ENCODE measurements at regions of chr14 and their contacts with region 1.

Region 1: DNA sequence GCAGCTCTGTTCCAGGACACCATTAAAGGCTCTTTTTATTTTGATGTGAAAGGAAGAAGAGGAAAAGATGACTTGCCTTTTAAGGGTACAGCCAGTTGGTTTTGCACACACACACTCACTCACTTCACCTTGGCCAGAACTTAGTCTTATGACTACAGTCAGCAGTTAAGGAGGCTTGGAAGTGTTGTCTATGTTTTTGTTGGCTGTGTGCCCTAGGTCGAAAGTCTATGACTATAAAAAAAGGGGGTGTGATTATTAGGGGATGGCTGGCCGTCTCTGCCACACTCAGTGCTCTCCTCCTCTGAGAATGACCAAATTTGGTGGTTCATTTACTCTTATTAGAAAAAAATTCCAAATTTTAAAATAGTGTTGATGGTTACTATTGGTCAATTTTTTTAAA is 139.5 kb upstream of the OTX2 start:
- DNase-seq: no peak
- ATAC-seq: no peak
- H3K4me3 ChIP-seq: no peak overlapping the region
- H3K27ac ChIP-seq: no peak overlapping the region
- H3K4me1 ChIP-seq: peaks cover 0 to 6% of the 10 kb centered on the region in 2 experiments; a peak in 1 of 4 replicates
- H3K27me3 ChIP-seq: peaks cover 65% of the 10 kb centered on the region
- CTCF ChIP-seq: no peak
- POLR2A ChIP-seq: no peak
- RAD21 ChIP-seq: no peak

Region 2: GRCh38 chr14:56081139-56081538 is 868.7 kb before region 1 on chr14:
- CTCF ChIA-PET with region 1: no interaction called
- POLR2A ChIA-PET with region 1: no interaction called
- RAD21 ChIA-PET with region 1: no interaction called
- intact Hi-C with region 1: no loop called
- DNase-seq: no peak
- ATAC-seq: no peak
- H3K4me3 ChIP-seq: no peak overlapping the region
- H3K27ac ChIP-seq: no peak overlapping the region
- H3K4me1 ChIP-seq: no peaks in the 10 kb centered on the region
- H3K27me3 ChIP-seq: peaks cover 63% of the 10 kb centered on the region
- CTCF ChIP-seq: no peak
- POLR2A ChIP-seq: no peak
- RAD21 ChIP-seq: no peak

Region 3: DNA sequence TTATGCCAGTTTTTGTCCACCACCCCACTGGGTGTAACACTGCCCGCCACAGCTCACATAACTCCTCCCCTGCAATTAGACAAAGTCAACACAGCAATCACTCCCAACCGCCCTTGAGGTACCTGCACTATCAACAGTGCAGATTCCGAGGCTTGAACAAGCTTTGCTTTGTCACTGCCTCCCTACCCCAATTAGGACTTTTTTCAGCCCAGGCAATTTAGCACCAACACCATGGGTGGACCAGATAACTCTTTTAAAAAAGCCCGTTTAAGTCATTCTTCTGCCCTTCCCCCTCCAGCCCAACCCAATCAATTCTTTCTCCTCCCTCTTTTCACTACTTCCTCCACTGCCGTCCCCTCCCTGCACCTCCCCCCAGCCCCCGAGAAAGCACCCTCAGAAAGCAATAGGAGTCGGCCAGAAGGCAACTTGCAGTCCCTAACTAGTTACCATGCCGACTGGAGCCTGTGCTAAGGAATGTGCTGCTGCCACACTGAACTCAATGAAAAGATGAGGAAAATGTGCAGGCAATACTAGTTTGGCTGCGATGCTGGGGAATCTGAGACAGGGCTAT is 93.9 kb before region 1 on chr14:
- CTCF ChIA-PET with region 1: no interaction called
- POLR2A ChIA-PET with region 1: no interaction called
- RAD21 ChIA-PET with region 1: no interaction called
- intact Hi-C with region 1: no loop called
- DNase-seq: no peak
- ATAC-seq: no peak
- H3K4me3 ChIP-seq: no peak overlapping the region
- H3K27ac ChIP-seq: no peak overlapping the region
- H3K4me1 ChIP-seq: no peaks in the 10 kb centered on the region
- H3K27me3 ChIP-seq: peaks cover 49% of the 10 kb centered on the region
- CTCF ChIP-seq: no peak
- POLR2A ChIP-seq: no peak
- RAD21 ChIP-seq: no peak

Region 4: DNA sequence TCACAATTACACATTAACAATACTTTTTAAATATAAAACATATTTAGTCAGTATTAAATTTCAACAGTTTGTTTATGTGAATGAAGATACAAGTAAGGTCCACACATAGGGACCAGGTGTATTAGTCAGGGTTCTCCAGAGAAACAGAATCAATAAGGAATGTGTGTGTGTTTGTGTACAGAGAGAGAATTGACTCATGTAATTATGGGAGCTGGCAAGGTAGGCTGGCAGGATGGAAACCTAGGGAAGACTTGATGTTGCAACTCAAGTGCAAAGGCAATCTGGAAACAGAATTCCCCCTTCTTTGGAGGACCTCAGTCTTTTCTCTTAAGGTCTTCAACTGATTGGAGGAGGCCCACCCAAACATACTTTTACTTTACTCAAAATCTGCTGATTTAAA is 16.4 kb before region 1 on chr14:
- CTCF ChIA-PET with region 1: no interaction called
- POLR2A ChIA-PET with region 1: no interaction called
- RAD21 ChIA-PET with region 1: no interaction called
- intact Hi-C with region 1: no loop called
- DNase-seq: no peak
- ATAC-seq: no peak
- H3K4me3 ChIP-seq: no peak overlapping the region
- H3K27ac ChIP-seq: no peak overlapping the region
- H3K4me1 ChIP-seq: no peaks in the 10 kb centered on the region
- H3K27me3 ChIP-seq: no peaks in the 10 kb centered on the region
- CTCF ChIP-seq: no peak
- POLR2A ChIP-seq: no peak
- RAD21 ChIP-seq: no peak

Region 5: DNA sequence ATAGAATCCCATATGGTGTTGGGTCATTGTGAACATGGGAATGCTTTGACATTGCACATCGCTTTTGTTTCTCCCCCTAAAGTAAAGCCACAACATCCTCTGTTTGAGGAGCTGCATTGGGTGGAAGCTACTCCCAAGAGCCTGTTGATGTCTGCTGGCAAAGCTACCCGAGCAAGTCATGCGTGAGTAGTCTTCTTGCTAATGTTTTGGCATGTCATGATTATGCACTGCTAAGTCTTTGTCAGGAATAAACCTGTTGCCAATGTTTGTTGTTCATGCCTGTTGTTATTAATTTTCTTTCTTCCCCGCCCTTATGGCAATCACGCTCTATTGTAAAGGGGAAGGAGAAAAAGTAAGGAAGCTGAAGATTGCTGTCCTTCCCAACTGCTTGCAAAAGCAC is 221.5 kb after region 1 on chr14:
- CTCF ChIA-PET with region 1: no interaction called
- POLR2A ChIA-PET with region 1: no interaction called
- RAD21 ChIA-PET with region 1: no interaction called
- intact Hi-C with region 1: loop called (anchors 10 kb)
- DNase-seq: no peak
- ATAC-seq: no peak
- H3K4me3 ChIP-seq: no peak overlapping the region
- H3K27ac ChIP-seq: no peak overlapping the region
- H3K4me1 ChIP-seq: no peaks in the 10 kb centered on the region
- H3K27me3 ChIP-seq: 0 out of 2 replicates have a peak, but pooled peaks cover 5% of the 10 kb centered on the region
- CTCF ChIP-seq: no peak
- POLR2A ChIP-seq: no peak
- RAD21 ChIP-seq: no peak